Aorta (tissue), 5 donors: ENCODE measurements at regions of chr1 and their contacts with region 1.

Region 1: GRCh38 chr1:11320153-11320936 is 47.3 kb downstream of the UBIAD1 start:
- DNase-seq: no peak
- ATAC-seq: no peak
- H3K4me3 ChIP-seq: no peak overlapping the region
- H3K27ac ChIP-seq: no peak overlapping the region
- H3K4me1 ChIP-seq: no peaks in the 10 kb centered on the region
- H3K27me3 ChIP-seq: no peaks in the 10 kb centered on the region

Region 2: DNA sequence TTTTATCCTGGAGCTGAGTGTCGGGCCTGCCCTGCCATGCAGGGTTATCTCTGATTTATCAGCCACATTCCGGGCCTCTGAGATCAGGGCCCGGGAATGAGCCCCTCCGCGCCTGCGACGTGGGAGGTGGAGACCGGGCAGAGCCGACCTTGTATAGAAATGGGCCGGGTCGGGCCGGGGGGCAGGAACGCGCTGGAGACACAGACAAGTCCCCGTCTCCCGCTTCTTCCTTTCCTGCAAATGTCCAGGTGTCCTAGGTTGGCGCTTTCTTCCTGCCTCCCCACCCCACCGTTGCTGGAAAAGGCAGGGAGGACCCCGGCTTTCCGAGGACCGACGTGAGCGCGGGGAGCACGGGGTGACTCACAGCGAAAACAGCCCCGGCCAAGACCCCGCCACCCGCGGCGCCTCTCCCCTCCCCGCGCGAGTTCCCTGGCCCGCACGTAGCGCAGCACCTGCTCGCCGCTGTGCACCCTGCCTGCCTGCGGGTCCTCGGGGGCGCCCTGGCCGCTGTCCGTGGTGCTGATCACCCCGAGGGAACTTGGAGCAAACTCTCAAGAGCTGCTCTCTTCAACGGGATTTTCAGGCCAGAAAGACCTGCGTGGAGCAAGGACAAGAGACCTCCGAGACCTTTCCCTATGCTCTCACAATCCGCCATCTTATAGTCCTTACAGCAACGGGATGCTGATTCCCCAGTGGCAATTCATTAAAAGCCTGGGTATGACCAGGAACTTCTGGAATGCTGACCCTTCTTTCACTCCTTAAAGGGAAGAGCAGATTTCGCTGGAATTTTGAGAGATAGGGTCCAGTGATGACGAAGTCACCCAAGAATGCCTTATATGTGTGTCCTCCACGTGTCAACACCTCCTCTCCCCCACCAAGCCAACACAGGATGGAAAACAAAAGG is 538.9 kb after region 1 on chr1:
- intact Hi-C with region 1: loop called in 1 of 2 experiments (anchors 10 kb)
- DNase-seq: peak; percentile 71 to 89
- ATAC-seq: peak; percentile 58
- H3K4me3 ChIP-seq: no peak overlapping the region
- H3K27ac ChIP-seq: no peak overlapping the region
- H3K4me1 ChIP-seq: no peaks in the 10 kb centered on the region
- H3K27me3 ChIP-seq: no peaks in the 10 kb centered on the region